HEK293 (cell line): ENCODE measurements at regions of chr20 and their contacts with region 1.

Region 1: GRCh38 chr20:5448449-5449118 is 131.8 kb upstream of the PROKR2 start:
- H3K4me3 ChIP-seq: no peak overlapping the region
- H3K27ac ChIP-seq: no peak overlapping the region
- H3K4me1 ChIP-seq: no peaks in the 10 kb centered on the region
- CTCF ChIP-seq: peak; percentile 22; the same call in 1 of the 2 replicates

Region 2: DNA sequence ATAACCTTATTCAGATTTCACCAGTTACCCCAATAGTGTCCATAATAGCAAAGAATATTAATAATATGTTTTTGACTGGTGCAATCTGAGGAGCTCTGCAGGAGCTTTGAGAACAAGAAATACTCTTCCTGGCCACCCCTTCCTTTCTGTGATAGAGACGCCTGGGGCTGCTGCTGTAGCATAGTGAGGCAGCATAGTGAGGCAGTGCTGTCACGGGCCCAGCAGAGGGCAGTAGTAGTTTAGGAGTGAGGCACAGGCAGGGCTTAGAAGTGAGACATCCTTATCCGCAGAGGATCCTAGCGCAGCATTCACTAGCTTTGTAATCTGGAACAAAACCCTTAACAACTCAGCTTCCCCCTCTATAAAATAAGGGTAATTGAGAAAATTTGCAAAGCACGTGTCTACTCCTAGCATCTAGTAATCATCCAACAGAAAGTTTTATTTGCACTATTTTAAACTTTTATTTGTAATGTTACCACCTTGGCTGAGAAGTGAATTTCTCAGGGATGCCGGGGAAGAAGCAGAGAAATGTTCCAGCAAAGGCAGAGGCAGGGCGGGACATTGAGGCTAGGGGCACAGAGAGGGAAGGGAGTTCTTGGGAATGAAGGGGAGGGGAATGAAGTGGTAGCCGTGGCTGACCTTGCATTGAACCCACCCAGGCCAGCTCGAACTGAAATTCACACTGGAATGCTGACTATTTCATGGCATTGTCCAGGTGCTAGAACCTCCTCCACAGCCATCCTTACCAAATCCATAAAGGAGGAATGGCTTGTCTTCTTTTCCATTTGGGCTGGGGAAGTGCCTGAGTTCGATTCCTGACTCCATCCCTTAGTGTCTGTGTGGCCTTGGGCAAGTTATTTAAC is 243.0 kb before region 1 on chr20:
- CTCF ChIA-PET with region 1: interaction called, 91 read pairs
- POLR2A ChIA-PET with region 1: no interaction called
- H3K4me3 ChIP-seq: no peak overlapping the region
- H3K27ac ChIP-seq: no peak overlapping the region
- H3K4me1 ChIP-seq: no peaks in the 10 kb centered on the region
- CTCF ChIP-seq: peak; percentile 80

Region 3: DNA sequence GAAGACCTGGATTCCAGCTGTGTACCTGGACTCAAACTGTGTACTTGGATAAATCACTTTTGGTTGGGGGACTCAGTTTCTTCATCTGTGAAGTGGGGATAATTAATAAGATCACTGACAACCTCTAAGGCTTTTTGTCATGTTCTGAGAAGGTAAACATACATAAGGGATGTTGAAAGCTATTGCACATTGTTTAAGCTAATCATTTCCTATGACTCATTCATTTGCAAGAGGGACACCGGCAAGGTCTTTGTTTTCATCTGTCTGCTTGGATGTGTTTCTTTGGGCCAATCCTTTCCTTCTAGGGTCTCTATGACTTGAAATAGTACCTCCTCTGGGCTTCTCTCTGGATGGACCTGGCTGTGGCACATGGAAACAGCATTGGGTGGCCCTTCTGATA is 138.6 kb before region 1 on chr20:
- CTCF ChIA-PET with region 1: no interaction called
- POLR2A ChIA-PET with region 1: no interaction called
- H3K4me3 ChIP-seq: no peak overlapping the region
- H3K27ac ChIP-seq: no peak overlapping the region
- H3K4me1 ChIP-seq: no peaks in the 10 kb centered on the region
- CTCF ChIP-seq: no peak

Region 4: DNA sequence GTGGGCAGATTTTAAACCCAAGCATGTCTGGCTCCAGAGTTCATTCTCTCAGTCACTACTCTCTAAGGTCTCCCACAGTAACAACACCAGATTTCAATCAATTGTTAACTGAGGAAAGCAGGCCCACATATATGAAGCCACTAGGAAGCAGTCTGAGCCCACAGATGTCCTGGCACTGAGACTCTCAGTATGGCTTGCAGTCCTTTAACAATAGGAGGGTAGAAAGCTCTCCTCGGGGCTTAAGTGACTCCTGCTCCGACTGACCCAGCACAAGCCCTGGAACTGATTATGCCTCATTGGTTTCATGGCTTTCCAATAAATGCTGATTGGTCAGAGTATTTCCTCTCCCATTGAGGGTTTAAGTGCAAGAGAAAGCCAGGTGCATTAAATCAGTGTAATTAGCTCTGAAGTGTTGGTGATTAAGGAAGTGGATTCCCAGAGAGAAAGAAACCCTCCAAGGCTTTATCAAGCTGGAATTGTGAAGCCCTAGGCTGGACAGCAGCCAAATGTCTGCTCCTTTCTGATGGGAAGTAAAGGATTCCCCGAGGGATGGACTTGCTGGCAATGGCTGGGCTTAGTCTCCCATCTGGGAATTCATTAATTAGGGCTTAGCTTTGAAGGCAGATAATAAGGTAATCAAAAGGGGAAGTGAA is 55.2 kb before region 1 on chr20:
- CTCF ChIA-PET with region 1: interaction called, 13 read pairs
- POLR2A ChIA-PET with region 1: no interaction called
- H3K4me3 ChIP-seq: no peak overlapping the region
- H3K27ac ChIP-seq: no peak overlapping the region
- H3K4me1 ChIP-seq: no peaks in the 10 kb centered on the region
- CTCF ChIP-seq: no peak

Region 5: GRCh38 chr20:5402903-5403531 is 45.6 kb before region 1 on chr20:
- CTCF ChIA-PET with region 1: interaction called, 26 read pairs
- POLR2A ChIA-PET with region 1: no interaction called
- H3K4me3 ChIP-seq: no peak overlapping the region
- H3K27ac ChIP-seq: no peak overlapping the region
- H3K4me1 ChIP-seq: no peaks in the 10 kb centered on the region
- CTCF ChIP-seq: no peak

Region 6: DNA sequence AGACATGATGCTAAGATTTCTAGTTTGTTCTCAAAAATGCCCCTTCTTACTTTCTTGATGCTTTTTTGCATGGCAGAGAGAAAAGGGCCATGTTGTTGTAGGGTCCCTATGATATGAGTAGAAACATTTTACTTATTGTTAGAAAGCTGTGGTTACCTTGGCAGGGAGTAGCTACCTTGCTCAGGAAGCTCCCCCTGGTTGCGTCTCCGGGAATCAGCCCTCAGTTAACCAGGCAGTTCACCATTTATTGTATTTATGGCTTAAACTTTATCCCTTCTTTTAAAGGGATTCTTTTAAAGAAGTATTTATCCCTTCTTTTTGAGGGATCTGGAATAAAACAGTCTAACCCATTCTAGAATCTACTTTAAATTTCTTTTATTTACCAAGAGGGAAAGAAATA is 17.9 kb before region 1 on chr20:
- CTCF ChIA-PET with region 1: interaction called, 25 read pairs
- POLR2A ChIA-PET with region 1: no interaction called
- H3K4me3 ChIP-seq: no peak overlapping the region
- H3K27ac ChIP-seq: no peak overlapping the region
- H3K4me1 ChIP-seq: no peaks in the 10 kb centered on the region
- CTCF ChIP-seq: no peak

Region 7: GRCh38 chr20:5463007-5463686 is 14.6 kb after region 1 on chr20:
- CTCF ChIA-PET with region 1: interaction called, 25 read pairs
- POLR2A ChIA-PET with region 1: no interaction called
- H3K4me3 ChIP-seq: no peak overlapping the region
- H3K27ac ChIP-seq: no peak overlapping the region
- H3K4me1 ChIP-seq: no peaks in the 10 kb centered on the region
- CTCF ChIP-seq: no peak